HEK293 (cell line): ENCODE measurements at regions of chr19 and their contacts with region 1.

Region 1: GRCh38 chr19:46788262-46788967 is at the start of gene SLC1A5:
- H3K4me3 ChIP-seq: peak within 1 kb of the TSS; percentile 57
- H3K27ac ChIP-seq: peak within 1 kb of the TSS; percentile 96
- H3K4me1 ChIP-seq: peaks cover 24% of the 10 kb centered on the region
- CTCF ChIP-seq: no peak; the same call in 1 of the 2 replicates

Region 2: GRCh38 chr19:46600384-46601317 is 187.8 kb before region 1 on chr19:
- CTCF ChIA-PET with region 1: no interaction called
- POLR2A ChIA-PET with region 1: interaction called, 11 read pairs
- H3K4me3 ChIP-seq: peak overlapping the region; percentile 94
- H3K27ac ChIP-seq: peak overlapping the region; percentile 99
- H3K4me1 ChIP-seq: peaks cover 8% of the 10 kb centered on the region
- CTCF ChIP-seq: no peak

Region 3: DNA sequence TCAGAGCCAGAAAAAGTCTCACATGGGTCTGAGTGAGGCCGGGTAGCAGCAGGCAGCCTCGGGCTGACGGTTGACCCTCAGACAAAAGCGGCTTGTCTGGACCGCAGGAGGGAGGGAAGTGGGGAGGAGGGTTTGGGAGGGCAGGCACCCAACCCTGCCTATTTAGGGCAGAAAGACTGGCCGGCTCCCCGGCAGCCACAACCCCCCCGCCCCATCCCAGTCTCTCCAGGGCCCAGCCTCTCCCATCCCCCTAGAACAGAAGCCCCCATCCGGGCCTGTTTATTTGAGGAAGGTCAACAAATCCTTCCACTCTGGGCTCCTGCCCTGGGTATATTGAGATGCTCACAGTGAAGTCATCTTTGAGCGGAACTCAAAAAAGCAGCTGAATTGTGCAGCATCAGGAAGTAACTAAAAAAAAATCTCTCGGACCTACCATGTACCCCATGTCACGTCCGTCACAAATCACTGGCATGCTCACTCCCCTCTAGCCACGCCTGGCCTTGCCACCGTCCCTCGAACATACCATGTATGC is 133.7 kb before region 1 on chr19:
- CTCF ChIA-PET with region 1: no interaction called
- POLR2A ChIA-PET with region 1: no interaction called
- H3K4me3 ChIP-seq: no peak overlapping the region
- H3K27ac ChIP-seq: no peak overlapping the region
- H3K4me1 ChIP-seq: peaks cover 5% of the 10 kb centered on the region
- CTCF ChIP-seq: no peak

Region 4: DNA sequence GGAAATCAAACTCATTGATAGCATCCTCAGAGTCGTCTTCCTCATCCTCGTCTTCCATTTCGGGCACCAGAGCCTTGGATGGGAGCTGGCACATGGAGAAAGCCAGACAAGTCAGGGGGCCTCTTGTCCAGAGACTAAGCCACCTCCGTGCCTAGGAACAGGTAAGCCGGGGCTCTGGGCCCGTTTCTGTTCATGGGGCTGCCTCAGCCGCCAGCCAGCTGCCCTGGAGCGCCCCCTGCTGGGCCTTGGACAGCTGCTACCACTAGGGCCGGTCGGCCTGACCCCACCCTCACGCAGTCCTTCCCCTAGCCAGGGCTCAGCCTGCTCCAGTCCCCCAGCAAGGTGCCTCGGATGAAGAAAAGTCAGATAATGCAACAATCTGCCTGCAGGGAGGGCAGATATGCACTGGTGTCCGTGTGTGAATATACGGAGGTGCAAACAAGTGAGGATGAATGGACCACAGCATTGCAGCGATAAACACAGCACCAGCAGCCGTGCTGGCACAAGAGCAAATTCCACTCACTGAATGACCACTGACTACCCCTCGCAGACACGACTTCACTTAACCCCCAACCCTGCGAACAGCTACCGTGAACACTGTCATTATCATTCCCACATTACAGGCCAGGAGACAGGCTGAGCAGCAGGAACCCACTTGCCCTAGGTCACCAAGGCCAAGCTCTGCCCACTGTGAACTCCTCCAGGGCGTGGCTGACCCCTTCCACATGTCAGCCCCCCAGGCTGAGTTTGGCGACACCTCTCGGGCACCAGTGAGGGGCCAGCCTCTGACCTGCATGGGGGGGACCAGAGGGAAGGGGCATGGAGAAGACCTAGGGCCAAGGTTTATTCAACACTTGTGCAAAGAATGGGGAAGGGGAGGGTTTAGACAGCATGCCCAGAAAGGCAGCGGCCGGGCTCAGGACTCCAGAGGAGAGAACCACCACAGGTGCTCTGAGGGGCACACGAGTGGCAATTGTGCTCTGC is 59.4 kb before region 1 on chr19:
- CTCF ChIA-PET with region 1: no interaction called
- POLR2A ChIA-PET with region 1: no interaction called
- H3K4me3 ChIP-seq: no peak overlapping the region
- H3K27ac ChIP-seq: no peak overlapping the region
- H3K4me1 ChIP-seq: no peaks in the 10 kb centered on the region; the same call in 1 of the 2 replicates
- CTCF ChIP-seq: peak; percentile 86

Region 5: GRCh38 chr19:46766569-46767317 is 21.7 kb before region 1 on chr19:
- CTCF ChIA-PET with region 1: interaction called, 16 read pairs
- POLR2A ChIA-PET with region 1: interaction called, 21 read pairs
- H3K4me3 ChIP-seq: no peak overlapping the region
- H3K27ac ChIP-seq: no peak overlapping the region
- H3K4me1 ChIP-seq: peaks cover 12% of the 10 kb centered on the region
- CTCF ChIP-seq: peak; percentile 90

Region 6: GRCh38 chr19:46803555-46803954 is 15.1 kb after region 1 on chr19:
- CTCF ChIA-PET with region 1: no interaction called
- POLR2A ChIA-PET with region 1: interaction called, 33 read pairs
- H3K4me3 ChIP-seq: no peak overlapping the region
- H3K27ac ChIP-seq: no peak overlapping the region
- H3K4me1 ChIP-seq: no peaks in the 10 kb centered on the region
- CTCF ChIP-seq: no peak

Region 7: GRCh38 chr19:46828484-46828883 is 40.1 kb after region 1 on chr19:
- CTCF ChIA-PET with region 1: interaction called, 6 read pairs
- POLR2A ChIA-PET with region 1: interaction called, 17 read pairs
- H3K4me3 ChIP-seq: no peak overlapping the region
- H3K27ac ChIP-seq: no peak overlapping the region
- H3K4me1 ChIP-seq: peaks cover 3% of the 10 kb centered on the region
- CTCF ChIP-seq: no peak